GM12878 (cell line): ENCODE measurements at regions of chr17 and their contacts with region 1.

Region 1: GRCh38 chr17:72556944-72557826 is 436.4 kb downstream of the SOX9 start:
- DNase-seq: no peak
- ATAC-seq: peak; percentile 78
- H3K4me3 ChIP-seq: no peak overlapping the region
- H3K27ac ChIP-seq: no peak overlapping the region
- H3K4me1 ChIP-seq: no peaks in the 10 kb centered on the region
- H3K27me3 ChIP-seq: no peaks in the 10 kb centered on the region
- CTCF ChIP-seq: peak; percentile 82 to 85 (median 83)
- EP300 ChIP-seq: no peak
- POLR2A ChIP-seq: no peak
- RAD21 ChIP-seq: peak; percentile 79

Region 2: DNA sequence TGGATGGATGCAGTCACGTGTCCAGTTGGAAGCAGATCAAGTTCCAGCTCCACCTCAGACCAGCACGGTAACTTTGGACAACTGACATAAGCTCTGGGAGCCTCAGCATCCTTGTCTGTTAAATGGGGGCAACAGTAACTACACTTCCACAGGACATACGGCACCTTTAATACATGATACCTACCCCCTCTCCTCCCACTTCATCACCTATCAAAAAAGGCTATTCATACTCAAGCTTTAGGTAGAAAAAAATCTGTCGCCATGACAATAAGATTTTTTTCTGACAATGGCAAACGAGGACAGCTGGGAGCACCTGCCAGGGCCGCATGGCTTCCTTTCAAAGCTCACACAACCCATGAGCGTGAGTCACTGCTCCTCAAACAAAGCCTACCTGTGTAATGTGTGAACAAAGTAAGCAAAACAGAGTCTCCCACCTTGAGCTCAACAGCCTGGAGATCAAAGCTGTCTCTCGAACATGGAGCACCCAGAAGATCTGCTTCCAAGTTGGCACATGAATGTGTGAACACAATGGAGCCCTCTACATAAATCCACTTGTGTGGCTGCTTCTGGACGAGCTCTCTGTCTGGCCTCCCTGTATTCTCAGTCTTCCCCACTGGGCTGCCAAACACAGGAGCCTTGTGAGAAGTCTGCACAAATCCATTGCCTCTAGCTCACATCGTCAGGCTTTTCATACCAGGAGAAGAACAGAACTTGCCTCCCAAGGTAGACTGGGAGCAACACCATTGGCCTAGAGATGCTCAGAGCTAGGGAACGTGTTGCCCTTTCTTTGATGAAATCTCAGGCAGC is 23.3 kb after region 1 on chr17:
- CTCF ChIA-PET with region 1: interaction called, 66 read pairs
- POLR2A ChIA-PET with region 1: no interaction called
- RAD21 ChIA-PET with region 1: interaction called, 4 read pairs
- SMC1A ChIA-PET with region 1: interaction called, 34 read pairs
- in situ Hi-C with region 1: no loop called
- intact Hi-C with region 1: no loop called
- DNase-seq: no peak
- ATAC-seq: peak; percentile 19; the same call in 1 of the 3 replicates
- H3K4me3 ChIP-seq: no peak overlapping the region
- H3K27ac ChIP-seq: no peak overlapping the region
- H3K4me1 ChIP-seq: no peaks in the 10 kb centered on the region
- H3K27me3 ChIP-seq: 0 out of 4 replicates have a peak, but pooled peaks cover 0 to 2% of the 10 kb centered on the region in 2 experiments
- CTCF ChIP-seq: no peak
- EP300 ChIP-seq: no peak
- POLR2A ChIP-seq: no peak
- RAD21 ChIP-seq: no peak

Region 3: DNA sequence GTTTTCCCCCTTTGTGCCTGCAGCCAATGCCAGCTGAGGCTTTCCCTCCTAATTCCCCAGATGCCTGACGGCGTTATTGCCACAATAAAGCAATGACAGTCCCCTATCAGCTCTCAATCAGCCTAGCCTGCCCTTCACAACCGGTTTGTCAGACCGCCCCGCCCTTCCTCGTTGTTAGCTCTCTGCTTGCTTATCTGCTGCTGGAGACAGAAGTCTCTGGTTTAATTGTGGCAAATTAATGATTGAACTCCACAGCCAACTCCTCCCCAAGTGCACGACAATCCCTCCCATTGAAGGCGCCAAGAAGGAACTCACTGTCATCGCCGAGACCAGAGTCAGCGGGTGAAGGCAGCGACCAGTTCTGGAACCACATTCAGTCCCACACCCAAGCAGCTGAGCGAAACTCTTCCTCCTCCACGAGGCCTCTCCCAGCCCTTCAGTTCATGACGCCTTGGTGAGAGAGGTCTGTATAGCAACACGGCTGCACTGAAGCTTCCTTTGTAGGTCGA is 60.9 kb after region 1 on chr17:
- CTCF ChIA-PET with region 1: interaction called, 26 read pairs
- POLR2A ChIA-PET with region 1: no interaction called
- RAD21 ChIA-PET with region 1: interaction called, 19 read pairs
- SMC1A ChIA-PET with region 1: interaction called, 23 read pairs
- in situ Hi-C with region 1: no loop called
- intact Hi-C with region 1: loop called (anchors 5 kb)
- DNase-seq: no peak
- ATAC-seq: peak; percentile 48
- H3K4me3 ChIP-seq: no peak overlapping the region
- H3K27ac ChIP-seq: no peak overlapping the region
- H3K4me1 ChIP-seq: no peaks in the 10 kb centered on the region
- H3K27me3 ChIP-seq: no peaks in the 10 kb centered on the region
- CTCF ChIP-seq: no peak
- EP300 ChIP-seq: no peak
- POLR2A ChIP-seq: no peak
- RAD21 ChIP-seq: no peak

Region 4: DNA sequence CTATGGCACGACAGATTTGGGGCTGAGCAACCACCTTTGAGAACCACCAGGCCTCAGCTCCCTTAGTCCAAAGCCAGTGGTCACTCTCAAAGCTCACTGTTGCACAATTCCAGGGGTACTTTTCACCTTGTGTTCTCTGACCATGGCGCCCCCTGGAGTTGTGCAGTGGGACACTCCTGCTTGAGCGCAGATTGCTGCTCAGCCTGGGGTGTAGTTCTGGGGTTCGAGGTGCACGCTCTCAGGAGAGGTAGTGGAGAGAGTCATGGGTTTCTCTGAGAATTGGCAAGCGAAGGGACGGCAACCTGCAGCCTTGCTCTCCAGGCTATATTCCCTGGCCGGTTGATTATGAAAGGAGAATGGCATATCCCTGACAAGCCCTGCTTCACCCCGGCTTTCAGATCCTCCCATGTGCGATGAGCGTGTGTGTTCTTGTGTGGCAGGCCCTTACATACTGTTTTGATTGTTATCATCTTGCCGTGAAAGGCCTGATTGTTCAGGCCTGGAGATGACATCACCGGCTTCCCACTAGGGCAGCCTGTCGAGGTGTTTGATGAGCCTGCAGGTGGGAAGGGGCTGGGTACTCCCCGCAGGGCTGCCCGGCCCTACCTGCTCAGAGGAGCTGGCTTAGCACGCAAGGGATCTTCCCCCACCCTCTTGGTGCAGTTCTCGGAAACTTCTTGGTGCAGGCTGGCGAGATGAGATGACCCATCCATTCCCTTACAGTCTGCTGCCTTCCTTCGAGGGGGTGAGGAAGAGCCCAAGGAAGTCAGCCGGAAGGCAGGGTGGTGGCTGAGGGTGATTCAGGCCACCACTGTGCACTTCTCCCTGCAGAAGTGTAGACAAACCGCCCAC is 104.1 kb after region 1 on chr17:
- CTCF ChIA-PET with region 1: interaction called, 65 read pairs
- POLR2A ChIA-PET with region 1: no interaction called
- RAD21 ChIA-PET with region 1: interaction called, 13 read pairs
- SMC1A ChIA-PET with region 1: interaction called, 15 read pairs
- in situ Hi-C with region 1: no loop called
- intact Hi-C with region 1: loop called (anchors 1 kb)
- DNase-seq: no peak
- ATAC-seq: no peak
- H3K4me3 ChIP-seq: no peak overlapping the region
- H3K27ac ChIP-seq: no peak overlapping the region
- H3K4me1 ChIP-seq: peaks cover 4% of the 10 kb centered on the region; the same call in 1 of the 2 replicates
- H3K27me3 ChIP-seq: no peaks in the 10 kb centered on the region
- CTCF ChIP-seq: peak in 1 of 3 experiments; percentile 18; a peak in 1 of 6 replicates
- EP300 ChIP-seq: no peak
- POLR2A ChIP-seq: no peak
- RAD21 ChIP-seq: no peak

Region 5: GRCh38 chr17:72715906-72716572 is 158.9 kb after region 1 on chr17:
- CTCF ChIA-PET with region 1: interaction called, 35 read pairs
- POLR2A ChIA-PET with region 1: no interaction called
- RAD21 ChIA-PET with region 1: interaction called, 6 read pairs
- SMC1A ChIA-PET with region 1: interaction called, 8 read pairs
- in situ Hi-C with region 1: no loop called
- intact Hi-C with region 1: no loop called
- DNase-seq: no peak
- ATAC-seq: no peak
- H3K4me3 ChIP-seq: no peak overlapping the region
- H3K27ac ChIP-seq: no peak overlapping the region
- H3K4me1 ChIP-seq: peaks cover 12% of the 10 kb centered on the region
- H3K27me3 ChIP-seq: no peaks in the 10 kb centered on the region
- CTCF ChIP-seq: no peak
- EP300 ChIP-seq: no peak
- POLR2A ChIP-seq: no peak
- RAD21 ChIP-seq: no peak

Region 6: DNA sequence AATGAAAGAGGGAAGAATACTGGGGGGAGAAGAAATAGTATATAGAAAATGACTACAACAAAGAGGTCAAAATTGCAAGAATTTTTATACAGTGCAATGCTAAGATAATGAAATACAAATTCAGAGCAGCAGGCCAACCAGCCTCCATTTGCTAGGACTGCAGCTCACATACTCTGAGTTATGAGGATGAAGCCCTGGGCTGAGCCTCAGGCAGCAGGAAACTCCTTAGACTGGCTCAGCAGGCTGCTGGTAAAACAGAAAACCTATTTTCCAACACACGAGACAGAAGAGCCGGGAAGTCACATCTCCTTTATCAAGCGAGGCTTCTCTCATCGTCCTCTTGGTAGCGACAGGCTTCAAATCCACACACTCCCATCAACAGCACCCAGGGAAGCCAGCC is 238.8 kb after region 1 on chr17:
- CTCF ChIA-PET with region 1: no interaction called
- POLR2A ChIA-PET with region 1: no interaction called
- RAD21 ChIA-PET with region 1: no interaction called
- SMC1A ChIA-PET with region 1: no interaction called
- in situ Hi-C with region 1: no loop called
- intact Hi-C with region 1: no loop called
- DNase-seq: no peak
- ATAC-seq: no peak
- H3K4me3 ChIP-seq: no peak overlapping the region
- H3K27ac ChIP-seq: no peak overlapping the region
- H3K4me1 ChIP-seq: no peaks in the 10 kb centered on the region
- H3K27me3 ChIP-seq: no peaks in the 10 kb centered on the region
- CTCF ChIP-seq: no peak
- EP300 ChIP-seq: no peak
- POLR2A ChIP-seq: no peak
- RAD21 ChIP-seq: no peak

Region 7: DNA sequence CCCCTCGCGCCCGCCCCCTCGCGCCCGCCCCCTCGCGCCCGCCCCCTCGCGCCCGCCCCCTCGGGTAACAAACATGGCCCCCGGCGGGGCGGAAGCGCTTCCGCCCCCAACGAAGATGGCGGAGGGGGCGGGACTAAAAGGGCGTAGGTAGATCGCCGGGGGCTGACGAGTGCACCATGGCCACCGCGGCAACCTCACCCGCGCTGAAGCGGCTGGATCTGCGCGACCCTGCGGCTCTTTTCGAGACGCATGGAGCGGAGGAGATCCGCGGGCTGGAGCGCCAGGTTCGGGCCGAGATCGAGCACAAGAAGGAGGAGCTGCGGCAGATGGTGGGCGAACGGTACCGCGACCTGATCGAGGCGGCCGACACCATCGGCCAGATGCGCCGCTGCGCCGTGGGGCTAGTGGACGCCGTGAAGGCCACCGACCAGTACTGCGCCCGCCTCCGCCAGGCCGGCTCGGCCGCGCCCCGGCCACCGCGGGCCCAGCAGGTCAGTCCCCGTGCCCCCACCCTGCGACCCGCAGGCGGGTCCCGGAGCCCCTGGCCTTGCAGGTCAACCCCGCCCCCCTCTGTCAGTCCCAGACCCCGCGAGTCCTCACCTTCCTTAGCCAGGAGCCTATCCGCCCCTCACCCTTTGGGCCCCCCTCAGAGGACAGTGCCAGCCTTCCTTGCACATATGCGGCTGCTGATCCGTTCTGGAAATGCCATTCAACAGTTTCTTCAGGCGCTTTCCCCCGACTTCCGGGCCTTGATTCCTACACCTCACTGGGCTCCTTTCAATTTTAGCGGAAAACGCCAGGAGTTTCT is 635.9 kb after region 1 on chr17 and contains the start of gene COG1:
- CTCF ChIA-PET with region 1: interaction called, 64 read pairs
- POLR2A ChIA-PET with region 1: no interaction called
- RAD21 ChIA-PET with region 1: interaction called, 14 read pairs
- SMC1A ChIA-PET with region 1: interaction called, 6 read pairs
- in situ Hi-C with region 1: no loop called
- intact Hi-C with region 1: loop called (anchors 2 kb)
- DNase-seq: no peak
- ATAC-seq: peak; percentile 85
- H3K4me3 ChIP-seq: peak within 1 kb of the TSS; percentile 76
- H3K27ac ChIP-seq: peak within 1 kb of the TSS; percentile 86
- H3K4me1 ChIP-seq: no peaks in the 10 kb centered on the region
- H3K27me3 ChIP-seq: no peaks in the 10 kb centered on the region
- CTCF ChIP-seq: no peak
- EP300 ChIP-seq: no peak
- POLR2A ChIP-seq: peak; percentile 80
- RAD21 ChIP-seq: no peak
- polyA plus RNA-seq, gene COG1: 10.5 to 11.4 TPM